CD8-positive, alpha-beta T cell (primary cell): ENCODE measurements at regions of chr21 and their contacts with region 1.

Region 1: GRCh38 chr21:33915368-33916199 is at the start of gene ATP5PO:
- DNase-seq: peak; percentile 91 to 98 (median 96)
- ATAC-seq: peak; percentile 99
- H3K4me3 ChIP-seq: peak within 1 kb of the TSS; percentile 78 to 94
- H3K4me3 Mint-ChIP-seq: peak within 1 kb of the TSS; percentile 97
- H3K27ac ChIP-seq: peak within 1 kb of the TSS; percentile 74 to 82
- H3K27ac Mint-ChIP-seq: peak within 1 kb of the TSS; percentile 94
- H3K4me1 ChIP-seq: peaks cover 18% of the 10 kb centered on the region
- H3K4me1 Mint-ChIP-seq: peaks cover 30% of the 10 kb centered on the region
- H3K27me3 ChIP-seq: no peaks in the 10 kb centered on the region
- H3K27me3 Mint-ChIP-seq: no peaks in the 10 kb centered on the region
- CTCF ChIP-seq: no peak
- total RNA-seq, gene ATP5PO: 129 to 143 TPM

Region 2: DNA sequence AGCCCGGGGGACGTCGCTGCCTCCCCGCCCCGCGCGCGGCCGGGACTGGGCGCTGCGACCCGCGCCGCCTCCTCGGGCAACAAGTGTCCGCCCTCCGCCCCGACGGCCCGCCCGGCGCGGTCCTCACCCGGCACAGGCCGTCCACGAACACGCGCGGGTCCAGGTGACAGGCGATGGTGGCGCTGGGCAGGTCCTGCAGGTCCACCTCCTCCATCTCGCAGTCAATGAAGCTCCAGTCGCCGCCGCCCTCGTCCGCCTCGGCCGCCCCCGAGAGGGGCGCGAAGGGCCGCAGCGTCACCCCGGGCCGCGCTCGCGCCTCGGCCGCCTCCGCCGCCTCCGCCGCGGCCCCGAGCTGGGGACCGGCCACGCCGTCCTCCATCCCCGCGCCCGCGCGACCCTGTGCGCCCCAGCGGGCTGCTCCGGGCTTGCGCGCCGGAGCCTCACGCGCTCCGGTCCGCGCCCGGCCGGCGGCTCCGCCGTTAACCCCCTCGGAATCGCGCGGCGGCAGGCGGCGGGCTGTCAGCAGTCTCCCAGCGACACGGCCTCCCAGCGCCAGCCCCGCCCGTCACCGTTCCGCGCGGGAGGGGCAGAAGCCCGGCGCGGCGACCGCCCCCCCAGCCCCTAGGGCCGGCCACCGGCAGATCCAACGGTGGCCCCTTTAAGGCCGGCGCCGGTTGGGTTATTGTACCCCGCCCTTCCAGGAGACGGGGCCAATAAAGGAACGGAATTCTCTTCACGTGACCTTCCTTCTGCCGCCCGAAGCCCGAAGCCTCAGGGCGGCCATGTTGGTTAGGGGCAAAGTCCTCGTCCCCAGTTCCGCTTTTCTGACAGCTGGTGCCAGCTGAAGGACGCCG is 699.3 kb after region 1 on chr21 and contains the start of gene RCAN1:
- CTCF ChIA-PET with region 1: no interaction called
- POLR2A ChIA-PET with region 1: interaction called, 3 read pairs
- intact Hi-C with region 1: loop called in 1 of 2 experiments (anchors 1 kb)
- DNase-seq: peak; percentile 64 to 94 (median 85)
- ATAC-seq: peak; percentile 95
- H3K4me3 ChIP-seq: peak within 1 kb of the TSS; percentile 51 to 63
- H3K4me3 Mint-ChIP-seq: peak within 1 kb of the TSS; percentile 90
- H3K27ac ChIP-seq: peak within 1 kb of the TSS; percentile 41 to 68
- H3K27ac Mint-ChIP-seq: peak within 1 kb of the TSS; percentile 91
- H3K4me1 ChIP-seq: peaks cover 13% of the 10 kb centered on the region
- H3K4me1 Mint-ChIP-seq: peaks cover 21% of the 10 kb centered on the region
- H3K27me3 ChIP-seq: no peaks in the 10 kb centered on the region
- H3K27me3 Mint-ChIP-seq: no peaks in the 10 kb centered on the region
- CTCF ChIP-seq: no peak
- total RNA-seq, gene RCAN1: 0.73 to 1.0 TPM